Transverse colon (tissue), 4 donors: ENCODE measurements at regions of chr1 and their contacts with region 1.

Region 1: GRCh38 chr1:47487850-47488450 is 50.1 kb downstream of the FOXD2 start:
- DNase-seq: no peak
- H3K4me3 ChIP-seq: no peak overlapping the region
- H3K27ac ChIP-seq: no peak overlapping the region
- H3K4me1 ChIP-seq: no peaks in the 10 kb centered on the region
- H3K27me3 ChIP-seq: no peaks in the 10 kb centered on the region
- CTCF ChIP-seq: no peak
- EP300 ChIP-seq: no peak
- POLR2A ChIP-seq: no peak

Region 2: GRCh38 chr1:47252369-47252768 is 235.6 kb before region 1 on chr1:
- in situ Hi-C with region 1: no loop called
- intact Hi-C with region 1: no loop called
- DNase-seq: no peak
- H3K4me3 ChIP-seq: no peak overlapping the region
- H3K27ac ChIP-seq: no peak overlapping the region
- H3K4me1 ChIP-seq: no peaks in the 10 kb centered on the region
- H3K27me3 ChIP-seq: no peaks in the 10 kb centered on the region
- CTCF ChIP-seq: no peak
- EP300 ChIP-seq: no peak
- POLR2A ChIP-seq: no peak

Region 3: DNA sequence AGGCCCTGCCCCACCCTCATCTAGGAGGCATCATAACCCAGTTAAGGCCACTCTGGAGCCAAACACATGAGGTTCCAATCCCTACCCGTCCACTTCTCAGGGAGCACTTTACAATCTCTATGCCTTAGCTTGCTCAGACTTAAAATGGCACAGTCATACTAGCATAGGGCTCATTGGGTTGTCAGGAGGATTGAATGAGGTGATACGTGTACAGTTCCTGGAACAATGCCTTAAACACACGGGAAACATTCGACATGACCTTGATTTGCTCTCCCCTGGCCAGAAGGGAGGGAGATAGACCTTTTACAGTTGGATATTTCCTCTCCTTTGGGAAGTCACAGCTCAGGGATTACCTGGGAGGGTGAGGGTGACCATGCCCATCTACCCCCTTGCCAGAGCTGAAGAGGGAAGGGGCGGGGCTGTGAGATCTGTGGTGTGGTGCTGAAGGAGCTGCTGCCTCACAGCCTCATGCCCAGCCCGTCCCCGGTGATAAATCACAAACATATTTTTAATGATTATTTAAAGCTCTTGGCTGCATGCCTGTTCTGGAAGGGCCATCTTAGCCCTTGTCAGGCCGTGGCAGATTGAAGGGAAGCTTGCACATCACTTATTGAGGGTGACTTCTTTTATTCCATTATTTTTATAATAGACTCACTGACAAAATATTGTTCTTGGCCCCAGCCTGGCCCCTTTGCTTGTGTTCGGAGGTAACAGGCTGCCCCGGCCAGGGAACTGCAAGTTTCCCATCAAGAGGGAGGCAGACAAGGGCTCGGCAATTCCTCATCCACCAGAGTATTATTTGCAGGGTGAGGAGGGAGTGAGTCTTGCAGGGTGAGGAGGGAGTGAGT is 33.3 kb after region 1 on chr1:
- in situ Hi-C with region 1: no loop called
- intact Hi-C with region 1: loop called (anchors 1 kb)
- DNase-seq: no peak
- H3K4me3 ChIP-seq: no peak overlapping the region
- H3K27ac ChIP-seq: no peak overlapping the region
- H3K4me1 ChIP-seq: no peaks in the 10 kb centered on the region
- H3K27me3 ChIP-seq: no peaks in the 10 kb centered on the region
- CTCF ChIP-seq: no peak
- EP300 ChIP-seq: no peak
- POLR2A ChIP-seq: no peak